ENCODE measurements at regions of chr17 and their contacts with region 1.

Region 1: GRCh38 chr17:64025732-64026294 is 5.4 kb upstream of the ICAM2 start:
- DNase-seq: peak; percentile 97
- ATAC-seq: peak; percentile 87
- H3K4me3 Mint-ChIP-seq: peak overlapping the region; percentile 65
- H3K27ac Mint-ChIP-seq: peak overlapping the region; percentile 92
- H3K4me1 Mint-ChIP-seq: peaks cover 60% of the 10 kb centered on the region
- H3K27me3 Mint-ChIP-seq: no peaks in the 10 kb centered on the region

Region 2: GRCh38 chr17:63911657-63912426 is 114.0 kb before region 1 on chr17:
- CTCF ChIA-PET with region 1: interaction called, 68 read pairs
- DNase-seq: peak; percentile 73
- ATAC-seq: peak; percentile 65
- H3K4me3 Mint-ChIP-seq: no peak overlapping the region
- H3K27ac Mint-ChIP-seq: no peak overlapping the region
- H3K4me1 Mint-ChIP-seq: no peaks in the 10 kb centered on the region
- H3K27me3 Mint-ChIP-seq: peaks cover 31% of the 10 kb centered on the region

Region 3: DNA sequence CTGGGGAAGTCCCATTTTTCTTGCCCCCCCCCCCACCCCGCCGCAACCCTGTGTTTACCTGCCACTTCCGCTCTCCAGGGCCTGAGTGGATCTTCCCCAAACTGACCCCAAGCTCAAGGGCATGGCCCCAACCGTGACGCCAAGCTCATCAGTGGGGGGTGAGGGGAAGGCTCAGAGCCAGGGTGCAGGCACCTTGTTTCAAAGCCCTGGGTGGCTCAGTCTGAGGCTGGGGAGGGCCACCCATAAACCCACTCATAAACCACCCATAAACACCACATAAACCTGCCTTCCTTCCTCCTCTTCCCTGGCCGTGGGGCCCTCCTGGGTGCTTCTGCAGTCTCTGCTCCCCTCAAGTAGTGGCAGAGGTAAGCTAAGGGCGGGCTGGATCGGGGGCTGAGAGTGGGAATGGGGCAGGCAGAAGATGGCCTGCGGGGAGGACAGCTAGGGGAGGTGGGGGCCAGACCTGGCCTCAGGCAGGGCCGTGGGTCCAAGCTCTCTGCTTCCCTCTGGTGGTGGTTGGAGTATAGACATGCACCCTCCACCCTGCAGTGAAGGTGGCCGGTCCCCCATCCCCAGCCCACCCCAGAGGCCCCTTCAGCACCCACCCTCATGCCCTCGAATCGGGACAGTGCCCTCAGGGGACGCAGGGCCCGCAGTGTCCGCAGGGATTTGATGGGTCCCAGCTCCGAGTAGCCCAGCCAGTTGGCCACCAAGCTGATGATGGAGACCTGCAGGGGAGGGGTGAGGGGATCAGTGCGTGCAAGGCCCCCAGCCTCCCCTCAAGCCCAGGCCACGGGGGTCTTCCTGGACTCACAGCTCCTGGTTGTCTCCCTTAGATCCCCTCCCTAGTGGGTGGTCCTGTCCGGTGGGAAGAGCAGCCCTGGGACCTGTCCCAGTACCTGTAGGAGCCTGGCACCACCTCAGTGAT is 79.1 kb before region 1 on chr17:
- CTCF ChIA-PET with region 1: interaction called, 32 read pairs
- DNase-seq: peak; percentile 79
- ATAC-seq: peak; percentile 85
- H3K4me3 Mint-ChIP-seq: peak overlapping the region; percentile 39
- H3K27ac Mint-ChIP-seq: peak overlapping the region; percentile 62
- H3K4me1 Mint-ChIP-seq: peaks cover 19% of the 10 kb centered on the region
- H3K27me3 Mint-ChIP-seq: peaks cover 21% of the 10 kb centered on the region

Region 4: DNA sequence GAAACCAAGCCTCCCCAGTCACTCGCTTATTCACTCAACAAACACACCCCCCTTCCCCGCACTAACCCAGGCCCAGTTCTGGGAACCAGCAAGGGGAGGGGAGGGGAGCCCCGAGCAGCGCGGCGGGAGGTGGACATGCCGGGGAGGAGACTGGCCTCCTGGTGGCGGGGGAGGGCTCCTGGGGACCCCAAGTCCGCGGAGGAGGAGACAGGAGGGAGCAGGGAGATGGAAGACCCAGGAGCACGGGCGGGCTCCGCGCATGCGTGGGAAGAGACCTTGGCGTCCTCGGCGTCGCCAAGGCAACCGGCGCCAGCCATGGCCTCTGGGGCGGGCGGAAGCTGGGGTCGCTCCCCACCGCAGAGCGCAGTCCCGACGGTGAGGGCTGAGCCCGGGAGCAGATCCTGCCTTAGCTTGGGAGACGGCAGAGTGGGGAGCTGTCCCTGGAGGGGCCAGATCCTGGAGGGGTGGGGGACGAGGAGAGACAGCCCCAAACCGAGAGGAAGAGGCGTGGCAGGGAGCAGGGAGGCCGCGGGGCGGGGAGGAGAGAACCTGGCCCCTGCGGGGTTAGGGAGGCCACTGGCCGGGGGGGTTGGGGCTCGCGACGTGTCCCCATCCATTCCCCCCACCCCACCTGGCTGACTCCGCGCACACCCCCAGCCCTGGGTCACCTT is 27.6 kb before region 1 on chr17 and contains the start of gene PRR29:
- CTCF ChIA-PET with region 1: interaction called, 126 read pairs
- DNase-seq: peak; percentile 86
- ATAC-seq: peak; percentile 84
- H3K4me3 Mint-ChIP-seq: peak within 1 kb of the TSS; percentile 87
- H3K27ac Mint-ChIP-seq: peak within 1 kb of the TSS; percentile 33
- H3K4me1 Mint-ChIP-seq: peaks cover 32% of the 10 kb centered on the region
- H3K27me3 Mint-ChIP-seq: peaks cover 4% of the 10 kb centered on the region
- total RNA-seq, gene PRR29: 1.5 to 3.3 TPM

Region 5: DNA sequence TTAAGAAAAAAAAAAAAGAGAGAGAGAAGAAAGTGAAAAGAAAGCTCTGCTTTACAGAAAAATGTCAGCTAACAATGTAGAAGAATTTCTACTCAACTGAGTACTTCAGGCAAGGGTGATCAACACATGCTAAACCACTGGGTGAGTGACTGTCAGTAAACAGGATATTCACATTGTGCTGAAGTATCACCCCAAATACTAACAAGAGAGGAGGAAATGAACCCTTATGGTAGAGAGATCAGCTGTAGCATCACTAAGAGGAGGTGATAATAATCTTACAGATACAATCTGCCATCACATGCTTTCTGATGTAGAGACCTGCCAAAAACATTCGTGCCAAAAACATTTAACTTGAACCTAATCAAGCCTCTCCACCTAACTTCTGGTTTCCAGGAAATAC is 25.3 kb after region 1 on chr17:
- CTCF ChIA-PET with region 1: interaction called, 87 read pairs
- DNase-seq: peak; percentile 58
- ATAC-seq: peak; percentile 99
- H3K4me3 Mint-ChIP-seq: no peak overlapping the region
- H3K27ac Mint-ChIP-seq: peak overlapping the region; percentile 82
- H3K4me1 Mint-ChIP-seq: peaks cover 27% of the 10 kb centered on the region
- H3K27me3 Mint-ChIP-seq: no peaks in the 10 kb centered on the region

Region 6: DNA sequence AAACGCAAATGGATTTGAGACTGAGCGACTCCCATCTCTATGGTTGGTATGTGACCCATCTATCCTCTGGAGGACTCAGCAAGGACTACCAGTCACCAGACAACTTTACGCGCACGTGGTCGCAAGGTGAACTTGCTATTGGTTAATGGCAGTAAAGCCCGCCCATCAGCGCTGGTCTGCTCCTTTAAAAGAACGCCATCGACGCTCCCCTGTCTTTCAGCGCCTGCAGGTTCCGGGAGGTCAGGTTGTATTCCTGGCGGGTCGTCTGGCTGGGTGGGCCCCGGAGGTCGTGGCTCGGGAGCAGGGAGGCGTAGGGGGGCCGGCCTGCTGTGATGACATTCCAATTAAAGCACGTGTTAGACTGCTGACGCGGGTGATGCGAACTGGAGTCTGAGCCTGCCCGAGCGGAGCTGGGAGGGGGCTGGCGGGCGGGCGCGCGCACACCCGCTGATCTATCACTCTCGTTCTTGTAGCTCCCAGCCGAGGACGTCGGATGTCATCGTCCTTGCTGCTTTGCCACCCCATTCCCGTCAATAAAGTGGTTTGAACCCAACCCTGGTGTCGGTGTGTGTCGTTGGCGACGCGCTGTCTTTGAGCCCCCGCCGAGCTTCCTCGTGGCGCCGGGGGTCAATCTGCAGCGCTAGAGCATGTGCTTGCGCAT is 120.1 kb after region 1 on chr17:
- CTCF ChIA-PET with region 1: interaction called, 31 read pairs
- DNase-seq: peak; percentile 99
- ATAC-seq: peak; percentile 95
- H3K4me3 Mint-ChIP-seq: no peak overlapping the region
- H3K27ac Mint-ChIP-seq: no peak overlapping the region
- H3K4me1 Mint-ChIP-seq: peaks cover 25% of the 10 kb centered on the region
- H3K27me3 Mint-ChIP-seq: no peaks in the 10 kb centered on the region

Measured in activated CD8-positive, alpha-beta memory T cell treated with anti-CD3 and anti-CD28 coated beads, Interleukin-2, amount 10 ng/mL, durations not matched to agents 7 days and 5 days (primary cell).